ENCODE measurements at regions of chr14 and their contacts with region 1.

Region 1: DNA sequence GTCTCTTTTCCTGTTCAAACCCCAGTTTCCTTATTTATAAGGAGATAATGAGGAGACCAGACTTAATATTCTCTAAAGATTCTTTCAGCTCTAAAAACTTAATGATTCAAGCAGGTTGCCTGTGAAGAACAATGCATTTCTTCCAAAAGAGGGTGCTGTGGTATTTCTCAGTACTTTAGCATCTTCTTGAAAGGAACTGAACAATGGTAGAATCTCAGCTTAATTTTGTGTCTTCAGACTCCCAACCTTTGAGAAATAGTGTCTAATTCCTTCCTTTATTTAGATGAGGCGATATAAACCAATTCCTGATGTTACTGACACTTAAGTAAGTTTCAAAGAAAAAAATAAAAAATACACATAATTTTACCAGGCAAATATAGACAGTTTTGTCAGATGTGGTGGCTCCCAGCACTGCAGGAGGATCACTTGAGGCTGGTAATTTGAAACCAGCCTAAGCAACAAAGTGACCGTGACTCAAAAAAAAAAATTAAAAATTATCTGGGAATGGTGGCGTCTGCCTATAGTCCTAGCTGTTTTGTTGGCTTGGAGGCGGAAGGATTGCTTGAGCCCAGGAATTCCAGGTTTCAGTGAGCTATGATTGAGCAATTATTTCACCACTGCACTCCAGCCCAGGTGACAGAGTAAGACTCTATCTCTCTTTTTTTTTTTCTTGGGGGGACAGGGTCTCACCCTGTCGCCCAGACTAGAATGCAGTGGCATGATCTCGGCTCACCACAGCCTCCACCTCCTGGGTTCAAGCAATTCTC is 76.9 kb upstream of the PSMA6 start:
- DNase-seq: peak; percentile 61
- H3K4me3 Mint-ChIP-seq: no peak overlapping the region
- H3K27ac Mint-ChIP-seq: peak overlapping the region; percentile 75
- H3K4me1 Mint-ChIP-seq: peaks cover 30% of the 10 kb centered on the region
- H3K27me3 Mint-ChIP-seq: no peaks in the 10 kb centered on the region
- CTCF ChIP-seq: peak; percentile 24

Region 2: GRCh38 chr14:35046048-35046741 is 169.1 kb before region 1 on chr14 and contains the start of gene FAM177A1:
- CTCF ChIA-PET with region 1: no interaction called
- POLR2A ChIA-PET with region 1: interaction called, 5 read pairs
- intact Hi-C with region 1: loop called (anchors 5 kb)
- DNase-seq: peak; percentile 97
- H3K4me3 Mint-ChIP-seq: peak within 1 kb of the TSS; percentile 94
- H3K27ac Mint-ChIP-seq: peak within 1 kb of the TSS; percentile 98
- H3K4me1 Mint-ChIP-seq: peaks cover 24% of the 10 kb centered on the region
- H3K27me3 Mint-ChIP-seq: no peaks in the 10 kb centered on the region
- CTCF ChIP-seq: no peak
- total RNA-seq, gene FAM177A1: 73.9 and 74.6 TPM in 2 replicates

Region 3: DNA sequence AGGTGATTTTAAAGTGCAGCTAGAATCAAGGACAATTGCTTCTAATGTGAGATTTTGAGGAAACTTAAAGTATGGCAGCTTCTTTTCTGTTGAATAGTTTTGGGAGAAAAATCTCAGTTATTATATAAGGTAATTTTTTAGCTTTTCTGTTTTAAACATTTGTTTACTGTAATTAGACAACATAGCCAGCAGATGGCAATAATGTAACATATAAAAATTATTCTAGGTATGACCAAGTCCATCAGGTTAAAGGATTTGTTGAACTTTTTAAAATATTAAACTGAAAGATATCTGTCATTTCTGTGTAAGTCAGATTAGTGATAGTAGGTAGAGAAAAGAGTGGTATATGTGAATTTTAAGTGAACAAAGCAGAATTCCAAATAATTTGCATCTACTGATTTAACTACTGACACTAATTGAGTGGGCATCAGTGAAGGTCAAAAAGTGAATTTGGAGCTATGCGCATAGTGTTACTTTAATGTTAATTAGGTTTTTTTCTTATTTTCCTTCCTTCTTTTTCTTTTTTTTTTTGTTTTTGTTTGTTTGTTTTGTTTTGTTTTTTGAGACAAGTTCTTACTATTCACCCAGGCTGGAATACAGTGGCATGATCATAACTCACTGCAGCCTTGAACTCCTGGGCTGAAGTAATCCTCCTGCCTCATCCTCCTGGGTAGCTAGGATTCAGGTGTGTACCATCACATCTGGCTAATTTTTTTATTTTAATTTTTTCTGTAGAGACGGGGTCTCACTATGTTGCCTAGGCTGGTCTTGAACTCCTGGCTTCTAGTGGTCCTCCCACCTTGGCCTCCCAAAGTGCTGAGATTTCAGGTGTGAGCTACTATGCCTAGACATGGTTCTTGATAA is 74.3 kb before region 1 on chr14:
- CTCF ChIA-PET with region 1: interaction called, 3 read pairs
- POLR2A ChIA-PET with region 1: interaction called, 3 read pairs
- intact Hi-C with region 1: loop called (anchors 2 kb)
- DNase-seq: no peak
- H3K4me3 Mint-ChIP-seq: no peak overlapping the region
- H3K27ac Mint-ChIP-seq: no peak overlapping the region
- H3K4me1 Mint-ChIP-seq: peaks cover 4% of the 10 kb centered on the region
- H3K27me3 Mint-ChIP-seq: no peaks in the 10 kb centered on the region
- CTCF ChIP-seq: peak; percentile 19

Region 4: DNA sequence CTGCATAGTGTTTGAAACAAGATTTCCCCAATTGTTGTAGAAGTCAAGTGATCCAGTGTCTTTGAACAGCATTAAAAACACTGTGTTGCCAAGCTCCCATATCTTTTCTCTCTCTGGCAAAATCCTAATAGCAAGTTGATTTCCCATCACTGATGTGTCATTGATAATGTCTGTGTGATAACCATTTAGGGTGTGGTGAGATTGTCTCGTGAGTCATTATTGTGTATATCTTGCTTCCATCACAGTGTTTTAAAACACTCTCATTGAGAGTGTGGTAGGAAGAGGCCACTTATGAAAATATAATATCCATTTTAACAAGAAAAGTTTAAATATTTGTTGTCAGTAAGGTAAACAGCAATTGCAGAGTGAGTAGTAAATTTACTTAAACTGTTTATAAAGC is 18.3 kb before region 1 on chr14:
- CTCF ChIA-PET with region 1: interaction called, 4 read pairs
- POLR2A ChIA-PET with region 1: interaction called, 18 read pairs
- intact Hi-C with region 1: no loop called
- DNase-seq: peak; percentile 18
- H3K4me3 Mint-ChIP-seq: no peak overlapping the region
- H3K27ac Mint-ChIP-seq: peak overlapping the region; percentile 82
- H3K4me1 Mint-ChIP-seq: peaks cover 17% of the 10 kb centered on the region
- H3K27me3 Mint-ChIP-seq: no peaks in the 10 kb centered on the region
- CTCF ChIP-seq: no peak

Region 5: DNA sequence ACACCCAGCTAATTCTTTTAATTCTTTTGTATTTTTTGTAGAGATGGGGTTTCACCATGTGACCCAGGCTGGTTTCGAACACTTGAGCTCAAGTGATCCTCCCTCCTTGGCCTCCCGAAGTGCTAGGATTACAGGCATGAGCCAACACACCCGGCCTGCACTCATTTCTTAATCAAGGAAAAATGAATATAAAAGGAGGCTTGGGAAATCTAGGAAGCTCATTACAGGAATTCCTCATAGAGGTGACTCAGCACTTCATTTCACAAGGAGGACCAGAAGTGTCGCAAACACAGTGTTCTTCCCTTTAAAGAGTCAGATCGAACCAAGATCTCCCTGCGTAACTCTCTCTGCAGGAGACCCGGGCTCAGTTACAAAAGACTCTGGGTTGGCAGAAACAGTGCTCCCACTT is 159.0 kb after region 1 on chr14:
- CTCF ChIA-PET with region 1: interaction called, 9 read pairs
- POLR2A ChIA-PET with region 1: interaction called, 12 read pairs
- intact Hi-C with region 1: no loop called
- DNase-seq: peak; percentile 99
- H3K4me3 Mint-ChIP-seq: peak overlapping the region; percentile 4
- H3K27ac Mint-ChIP-seq: peak overlapping the region; percentile 92
- H3K4me1 Mint-ChIP-seq: peaks cover 12% of the 10 kb centered on the region
- H3K27me3 Mint-ChIP-seq: no peaks in the 10 kb centered on the region
- CTCF ChIP-seq: no peak